ENCODE measurements at regions of chr10 and their contacts with region 1.

Region 1: GRCh38 chr10:14553448-14553847 is 221.2 kb downstream of the FAM107B start:
- DNase-seq: no peak
- H3K4me3 Mint-ChIP-seq: no peak overlapping the region
- H3K27ac Mint-ChIP-seq: peak overlapping the region; percentile 53
- H3K4me1 Mint-ChIP-seq: peaks cover 89% of the 10 kb centered on the region
- H3K27me3 Mint-ChIP-seq: no peaks in the 10 kb centered on the region

Region 2: DNA sequence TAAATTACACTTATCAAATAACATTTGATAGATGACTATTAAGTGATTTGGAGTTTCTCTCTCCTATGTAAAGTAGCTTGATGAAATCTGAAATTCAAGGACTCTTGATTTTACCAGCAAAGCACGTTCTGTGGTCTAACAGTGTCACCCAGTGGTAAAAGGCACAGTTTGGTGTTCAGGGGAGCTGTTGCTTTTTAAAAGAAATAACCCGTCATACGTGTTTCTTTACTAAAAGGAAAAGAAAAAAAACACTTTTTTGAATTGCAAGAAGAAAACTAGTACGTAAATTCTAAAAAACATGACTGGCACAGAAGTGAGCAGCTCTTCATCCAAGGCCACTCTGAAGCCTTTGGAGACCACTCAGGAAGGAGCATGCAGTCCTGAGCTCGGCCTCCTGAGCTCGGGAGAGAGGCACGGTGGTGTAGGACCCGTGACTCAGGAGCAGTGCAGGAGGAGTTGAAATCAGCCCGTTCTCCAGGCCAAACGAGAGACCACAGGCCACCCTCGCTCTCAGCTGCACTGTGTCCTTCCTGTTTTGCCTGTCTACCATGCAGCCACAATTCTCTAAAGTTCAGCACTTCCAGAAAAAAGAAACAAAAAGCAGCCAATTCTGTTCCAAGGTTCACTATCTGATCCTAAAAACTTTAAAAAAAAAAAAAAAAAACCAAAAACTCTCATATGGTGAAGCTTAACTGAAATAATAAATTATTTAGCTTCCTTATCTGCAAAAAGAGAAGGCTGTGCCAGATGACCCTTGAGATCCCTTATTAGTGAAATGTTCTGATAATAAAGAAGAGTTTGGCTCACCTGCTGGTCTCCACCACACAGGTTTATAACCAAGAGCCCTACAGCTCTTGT is 10.2 kb before region 1 on chr10:
- CTCF ChIA-PET with region 1: interaction called, 18 read pairs
- POLR2A ChIA-PET with region 1: interaction called, 17 read pairs
- DNase-seq: no peak
- H3K4me3 Mint-ChIP-seq: peak overlapping the region; percentile 14
- H3K27ac Mint-ChIP-seq: peak overlapping the region; percentile 54
- H3K4me1 Mint-ChIP-seq: peaks cover 77% of the 10 kb centered on the region
- H3K27me3 Mint-ChIP-seq: no peaks in the 10 kb centered on the region

Region 3: GRCh38 chr10:14571866-14572507 is 18.5 kb after region 1 on chr10:
- CTCF ChIA-PET with region 1: interaction called, 7 read pairs
- POLR2A ChIA-PET with region 1: interaction called, 26 read pairs
- DNase-seq: peak; percentile 68
- H3K4me3 Mint-ChIP-seq: peak overlapping the region; percentile 77
- H3K27ac Mint-ChIP-seq: peak overlapping the region; percentile 89
- H3K4me1 Mint-ChIP-seq: peaks cover 95% of the 10 kb centered on the region
- H3K27me3 Mint-ChIP-seq: no peaks in the 10 kb centered on the region